HepG2 (cell line): ENCODE measurements at regions of chr20 and their contacts with region 1.

Region 1: DNA sequence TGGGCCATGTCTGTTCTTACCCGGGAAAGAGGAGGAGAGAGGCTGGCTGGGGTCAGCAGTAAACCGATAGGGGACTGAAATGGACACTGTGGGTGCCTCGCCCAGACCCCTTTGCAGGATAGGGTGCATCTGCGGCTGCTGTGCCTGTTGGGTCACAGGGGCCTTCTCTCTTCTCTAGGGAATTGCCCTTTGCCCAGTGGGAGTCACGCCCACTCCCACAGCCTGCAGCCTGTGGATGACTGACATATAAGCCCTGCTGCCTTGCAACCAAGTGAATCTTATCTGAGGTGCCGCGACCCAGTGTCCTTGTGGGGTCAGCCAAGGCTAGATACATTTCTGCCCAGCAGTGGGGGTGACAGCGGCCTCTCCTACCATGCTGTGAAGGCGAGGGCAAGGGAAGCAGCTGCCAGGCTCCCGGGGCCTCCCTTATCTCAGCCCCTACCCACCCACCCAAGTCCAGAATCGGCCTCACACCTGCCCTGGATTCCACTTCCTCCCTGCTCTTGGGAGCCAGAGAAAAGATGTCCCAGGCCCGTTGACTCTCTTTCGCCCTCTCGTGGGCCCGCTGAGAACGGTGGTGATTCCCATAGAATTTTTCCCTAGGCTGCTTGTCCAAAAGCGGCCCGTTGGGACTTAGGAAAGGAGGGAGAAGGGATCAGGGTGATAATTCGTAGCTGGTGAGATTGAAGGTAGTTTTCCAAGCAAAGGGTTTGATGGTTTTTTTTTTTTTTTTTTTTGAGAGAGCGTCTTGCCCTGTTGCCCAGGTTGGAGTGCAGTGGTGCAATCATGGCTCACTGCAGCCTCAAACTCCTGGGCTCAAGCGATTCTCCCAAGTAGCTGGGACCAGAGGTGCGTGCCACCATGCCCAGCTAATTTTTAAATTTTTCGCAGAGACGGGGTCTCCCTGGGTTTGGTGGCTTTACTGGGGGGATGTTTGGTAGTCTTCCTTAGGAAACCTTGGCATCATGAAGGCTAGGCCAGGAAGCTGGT is 76.4 kb upstream of the RNF24 start:
- DNase-seq: peak; percentile 67
- ATAC-seq: peak; percentile 79
- H3K4me3 ChIP-seq: peak overlapping the region; percentile 20 to 76 (median 32); a peak in 4 of 6 replicates
- H3K27ac ChIP-seq: no peak overlapping the region
- H3K4me1 ChIP-seq: peaks cover 27% of the 10 kb centered on the region
- H3K27me3 ChIP-seq: peaks cover 0 to 3% of the 10 kb centered on the region in 2 experiments; a peak in 1 of 5 replicates
- CTCF ChIP-seq: peak; percentile 88
- EP300 ChIP-seq: no peak
- POLR2A ChIP-seq: no peak
- RAD21 ChIP-seq: 0 out of 2 replicates have a peak, but pooled peaks have one; percentile 46

Region 2: DNA sequence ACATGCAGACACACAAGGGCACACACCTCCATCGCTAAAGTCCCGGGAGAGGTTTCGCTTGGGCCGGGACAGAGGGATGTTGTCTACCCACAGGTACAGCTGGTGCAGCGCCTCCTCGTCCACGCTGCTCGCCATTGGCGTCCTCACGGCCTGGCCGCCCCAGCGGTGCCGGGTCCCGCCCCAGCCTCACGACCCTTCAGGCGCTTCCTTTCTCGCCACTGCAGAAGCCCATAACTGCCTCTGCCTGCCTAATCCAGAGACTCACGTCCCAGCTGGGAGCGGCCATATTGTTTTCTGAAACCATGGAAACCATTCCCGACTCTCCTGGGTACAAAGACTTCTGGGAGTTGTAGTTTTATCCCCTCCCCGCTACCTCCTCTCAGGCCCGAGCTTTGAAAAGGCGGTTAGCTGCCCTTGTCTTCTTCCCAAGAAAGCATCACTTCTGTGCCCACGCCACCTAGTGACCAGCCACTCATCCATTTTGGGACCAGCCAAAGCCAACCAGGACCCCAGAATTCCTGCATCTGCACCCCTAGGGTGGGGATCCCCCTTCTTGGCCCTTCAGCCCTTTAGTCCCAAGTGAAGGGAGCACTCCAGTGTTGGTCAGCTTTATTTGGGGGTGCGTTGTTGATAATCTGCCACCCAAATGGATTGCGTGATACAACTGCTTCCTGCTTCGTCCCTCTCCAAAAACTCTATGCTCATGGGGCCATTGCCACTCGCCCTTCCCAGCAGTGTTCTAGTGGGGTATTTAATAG is 310.5 kb before region 1 on chr20 and contains the start of gene SPEF1:
- CTCF ChIA-PET with region 1: no interaction called
- POLR2A ChIA-PET with region 1: no interaction called
- in situ Hi-C with region 1: no loop called
- intact Hi-C with region 1: loop called (anchors 5 kb)
- DNase-seq: peak; percentile 98
- ATAC-seq: peak; percentile 80
- H3K4me3 ChIP-seq: peak within 1 kb of the TSS; percentile 51 to 75 (median 59); a peak in 5 of 6 replicates
- H3K27ac ChIP-seq: no peak within 1 kb of the TSS
- H3K4me1 ChIP-seq: peaks cover 76% of the 10 kb centered on the region
- H3K27me3 ChIP-seq: peaks cover 2 to 31% of the 10 kb centered on the region in 2 experiments
- CTCF ChIP-seq: peak; percentile 79
- EP300 ChIP-seq: no peak
- POLR2A ChIP-seq: no peak
- RAD21 ChIP-seq: peak; percentile 63
- total RNA-seq, gene SPEF1: 0.27 and 0.32 TPM in 2 replicates

Region 3: DNA sequence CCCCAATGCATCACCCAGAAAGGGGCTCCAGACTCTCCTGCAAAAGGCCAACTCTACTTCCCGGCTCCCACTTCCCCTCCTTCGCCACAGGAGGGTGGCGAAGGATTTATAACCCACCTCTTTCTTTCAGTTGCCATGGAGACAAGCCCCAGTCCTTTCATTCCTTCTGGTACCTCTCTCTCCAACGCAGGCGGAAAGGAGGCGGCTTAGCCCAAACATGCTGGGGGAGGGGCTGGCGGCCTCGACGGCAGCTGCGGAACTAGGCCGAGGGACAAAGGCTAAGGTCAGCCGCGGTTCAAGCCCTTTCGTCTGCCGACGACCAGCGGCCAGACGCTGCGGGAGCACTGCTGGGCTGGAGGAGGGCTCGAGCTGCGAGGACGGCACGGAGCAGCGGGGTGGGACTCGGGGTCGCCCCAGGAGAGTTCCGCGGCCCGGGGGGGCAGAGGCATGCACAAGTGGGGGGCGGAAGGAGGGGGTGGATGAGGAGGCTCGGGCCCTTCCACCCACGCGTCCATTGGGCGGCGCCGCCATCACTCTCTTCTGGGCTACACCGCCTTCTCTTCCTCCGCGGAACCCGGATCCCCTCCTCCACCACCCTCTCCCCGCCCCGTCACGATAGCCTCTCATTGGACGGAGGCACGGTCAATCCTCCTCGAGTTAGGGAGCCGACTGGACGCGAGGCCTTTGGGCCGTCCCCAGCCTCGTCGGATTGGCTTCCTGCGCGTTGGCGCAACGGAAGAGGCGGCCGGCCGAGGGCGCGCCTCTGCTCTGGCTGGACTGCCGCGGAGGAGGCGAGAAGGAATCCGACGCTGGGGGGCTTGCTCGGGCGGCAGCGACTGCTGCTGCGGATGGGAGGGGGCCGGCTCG is 202.9 kb before region 1 on chr20 and contains the start of gene PANK2:
- CTCF ChIA-PET with region 1: no interaction called
- POLR2A ChIA-PET with region 1: no interaction called
- in situ Hi-C with region 1: loop called (anchors 5 kb)
- intact Hi-C with region 1: loop called (anchors 5 kb)
- DNase-seq: peak; percentile 99
- ATAC-seq: peak; percentile 97
- H3K4me3 ChIP-seq: peak within 1 kb of the TSS; percentile 86 to 94 (median 94)
- H3K27ac ChIP-seq: peak within 1 kb of the TSS; percentile 86
- H3K4me1 ChIP-seq: peaks cover 46% of the 10 kb centered on the region
- H3K27me3 ChIP-seq: no peaks in the 10 kb centered on the region; a peak in 1 of 5 replicates
- CTCF ChIP-seq: peak; percentile 65
- EP300 ChIP-seq: peak in 1 of 2 experiments; percentile 42; a peak in 1 of 4 replicates
- POLR2A ChIP-seq: peak; percentile 88 to 89
- RAD21 ChIP-seq: peak; percentile 78
- total RNA-seq, gene PANK2: 123 and 127 TPM in 2 replicates